Endothelial cell of umbilical vein (primary cell): ENCODE measurements at regions of chr2 and their contacts with region 1.

Region 1: DNA sequence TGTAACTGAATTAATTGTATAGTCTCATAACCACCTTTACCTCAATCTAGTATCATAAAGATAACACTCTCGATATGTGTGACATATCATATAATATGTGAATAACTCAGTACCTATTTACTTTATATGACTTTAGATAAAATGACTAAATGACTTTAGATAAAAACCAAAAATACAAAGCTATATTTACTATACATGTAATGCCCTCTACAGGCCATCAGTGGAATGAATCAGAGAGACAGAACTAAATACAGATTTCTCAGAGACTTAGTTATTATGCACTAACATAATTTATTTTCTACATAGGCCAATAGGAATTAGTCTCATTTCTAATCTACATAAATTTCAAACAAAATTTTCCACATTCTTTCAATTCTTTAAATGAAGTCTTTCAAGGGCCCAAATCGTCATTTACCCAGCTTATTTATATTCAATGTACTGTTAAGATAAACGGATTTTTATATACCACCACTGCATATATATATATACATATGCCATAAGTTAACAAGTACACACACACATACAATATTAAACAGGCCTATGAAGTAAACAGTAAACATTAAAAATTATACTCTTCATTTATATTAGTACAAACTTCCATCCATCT is 219.9 kb downstream of the EXOC6B start:
- DNase-seq: peak; percentile 43
- H3K4me3 ChIP-seq: no peak overlapping the region
- H3K27ac ChIP-seq: no peak overlapping the region
- H3K4me1 ChIP-seq: no peaks in the 10 kb centered on the region
- H3K27me3 ChIP-seq: no peaks in the 10 kb centered on the region
- CTCF ChIP-seq: peak; percentile 38 to 43
- POLR2A ChIP-seq: no peak

Region 2: GRCh38 chr2:72619626-72620025 is 13.7 kb after region 1 on chr2:
- CTCF ChIA-PET with region 1: interaction called, 55 read pairs
- POLR2A ChIA-PET with region 1: no interaction called
- dilution Hi-C with region 1: no loop called
- intact Hi-C with region 1: no loop called
- DNase-seq: no peak
- H3K4me3 ChIP-seq: no peak overlapping the region
- H3K27ac ChIP-seq: no peak overlapping the region
- H3K4me1 ChIP-seq: no peaks in the 10 kb centered on the region
- H3K27me3 ChIP-seq: no peaks in the 10 kb centered on the region
- CTCF ChIP-seq: no peak
- POLR2A ChIP-seq: no peak

Region 3: GRCh38 chr2:73175663-73176204 is 569.8 kb after region 1 on chr2:
- CTCF ChIA-PET with region 1: no interaction called
- POLR2A ChIA-PET with region 1: no interaction called
- dilution Hi-C with region 1: no loop called
- intact Hi-C with region 1: no loop called
- DNase-seq: peak; percentile 58
- H3K4me3 ChIP-seq: peak overlapping the region in 2 of 3 experiments; percentile 5 to 17
- H3K27ac ChIP-seq: no peak overlapping the region
- H3K4me1 ChIP-seq: peaks cover 32% of the 10 kb centered on the region
- H3K27me3 ChIP-seq: peaks cover 7 to 14% of the 10 kb centered on the region in 2 experiments
- CTCF ChIP-seq: no peak
- POLR2A ChIP-seq: no peak